ENCODE measurements at regions of chr20 and their contacts with region 1.

Region 1: DNA sequence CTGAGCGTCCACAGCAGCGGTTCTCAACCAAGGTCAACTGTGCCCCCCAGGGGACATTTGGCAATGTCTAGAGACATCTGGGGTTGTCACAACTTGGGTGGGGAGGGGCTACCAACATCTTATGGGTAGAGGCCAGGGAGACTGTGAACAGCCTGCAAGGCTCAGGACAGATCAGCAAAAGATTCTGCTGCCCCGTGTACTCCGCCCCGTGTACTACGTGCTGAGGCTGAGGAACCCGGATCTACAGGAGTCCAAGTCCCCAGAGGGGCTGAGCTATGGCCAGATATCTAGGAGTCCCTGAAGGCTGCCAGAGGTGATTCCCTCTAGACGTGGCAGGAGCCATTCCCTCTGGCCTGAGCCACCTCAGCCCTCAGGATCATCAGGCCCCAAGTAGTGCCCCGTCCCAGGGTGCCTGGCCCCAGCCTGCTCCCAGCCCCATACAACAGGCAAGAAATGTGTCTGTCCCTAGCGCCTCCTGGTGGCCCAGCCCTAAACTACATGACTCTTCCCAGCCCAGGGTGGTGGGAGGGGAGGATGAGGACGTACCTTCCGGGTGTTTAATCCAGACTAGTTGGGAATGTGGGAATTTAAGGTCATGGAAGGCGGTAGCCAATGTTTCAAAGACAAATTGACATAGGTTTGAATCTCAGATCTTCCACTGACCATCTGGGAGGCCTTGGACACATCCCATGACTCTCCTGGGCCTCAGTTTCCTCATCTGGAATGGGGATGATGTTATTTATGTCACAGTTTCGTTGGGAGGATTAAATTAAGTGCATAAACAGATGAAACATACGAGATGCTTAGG is 49.5 kb upstream of the PTPN1 start:
- DNase-seq: peak; percentile 92
- ATAC-seq: peak; percentile 85 to 86

Region 2: DNA sequence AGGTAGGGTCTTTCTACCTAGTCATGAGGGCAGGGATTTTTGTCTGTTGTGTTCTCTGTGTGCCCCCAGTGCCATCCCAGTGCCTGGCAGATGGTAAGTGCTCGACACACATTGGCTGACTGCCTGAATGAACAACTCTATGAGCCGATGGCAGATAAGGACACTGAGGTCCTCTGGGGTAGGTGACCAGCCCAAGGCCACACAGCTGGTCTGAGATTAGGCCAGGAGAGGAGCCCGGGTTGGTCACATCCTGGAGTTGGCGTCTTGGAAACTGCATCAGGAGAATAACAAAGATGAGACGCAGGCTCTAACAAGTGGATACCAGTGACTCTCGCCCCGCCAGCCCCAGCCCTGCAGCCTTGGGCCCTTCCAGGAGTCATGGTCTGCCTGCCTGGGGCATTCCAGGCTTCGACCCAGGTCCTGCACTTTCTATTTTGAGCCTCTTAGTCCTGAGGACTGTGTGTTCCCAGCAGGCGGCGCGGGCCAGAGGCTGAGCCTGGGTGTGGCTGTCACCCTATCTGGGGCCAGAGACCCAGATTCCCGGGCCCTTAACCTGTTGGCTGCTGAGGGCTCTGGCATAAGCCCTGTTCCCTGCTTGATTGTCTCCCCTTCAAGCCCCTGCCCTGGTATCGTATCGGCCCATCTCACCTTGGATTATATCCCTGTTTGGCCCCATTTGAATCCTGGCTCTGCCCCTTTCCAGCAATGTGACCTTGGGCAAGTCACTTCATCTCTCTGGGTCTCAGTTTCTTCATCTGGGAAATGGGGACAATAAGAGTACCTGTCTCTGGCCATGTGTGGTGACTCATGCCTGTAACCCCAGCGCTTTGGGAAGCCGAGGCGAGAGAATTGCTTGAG is 181.8 kb before region 1 on chr20:
- intact Hi-C with region 1: loop called in 1 of 2 experiments (anchors 10 kb)
- DNase-seq: peak; percentile 84
- ATAC-seq: peak; percentile 69 to 72

Region 3: DNA sequence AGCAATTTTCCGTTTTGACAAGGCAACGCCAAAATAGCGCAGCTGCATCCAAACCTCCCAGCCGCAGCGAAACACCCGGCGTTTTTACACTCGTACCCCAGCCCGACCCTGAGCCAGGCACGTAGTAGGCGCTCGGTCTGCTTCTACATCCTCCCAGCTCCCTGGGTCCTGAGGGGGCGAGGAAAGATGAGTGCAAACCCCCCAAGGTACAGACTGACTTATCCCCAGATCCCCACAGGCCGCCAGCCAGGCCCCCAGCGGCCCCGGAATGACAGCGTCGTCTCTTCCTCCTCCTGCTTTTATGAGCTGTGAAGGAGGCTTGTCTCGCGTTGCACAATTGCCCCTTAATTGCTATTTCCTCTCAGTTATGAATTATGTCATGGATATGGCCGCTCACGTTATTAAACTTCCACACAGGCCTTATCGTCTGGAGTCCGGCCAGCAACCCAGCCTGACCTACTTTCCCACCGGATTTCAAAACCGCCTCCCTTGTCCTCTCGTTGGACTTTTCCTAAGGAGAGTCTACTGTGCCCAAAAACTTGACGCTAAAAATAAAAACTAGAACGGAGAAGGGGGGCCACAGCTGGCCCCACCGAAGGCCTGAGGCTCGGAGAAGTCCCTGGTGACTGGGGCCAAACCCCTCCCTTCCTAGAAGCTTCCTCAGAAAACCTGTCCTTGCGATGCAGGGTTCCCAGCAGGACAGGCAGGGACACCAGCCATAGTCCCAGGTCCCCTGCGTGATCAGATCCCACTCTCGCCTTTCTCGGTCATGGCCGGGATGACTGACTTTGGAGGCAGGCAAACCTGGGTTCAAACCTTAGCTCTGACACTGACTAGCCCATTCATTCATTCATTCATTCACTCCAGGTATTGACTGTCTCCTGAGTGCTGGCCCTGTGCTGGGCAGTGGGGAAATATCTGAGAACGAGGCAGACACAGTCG is 81.3 kb before region 1 on chr20:
- intact Hi-C with region 1: loop called in 1 of 2 experiments (anchors 5 kb)
- DNase-seq: peak; percentile 94
- ATAC-seq: peak; percentile 83 to 88

Region 4: DNA sequence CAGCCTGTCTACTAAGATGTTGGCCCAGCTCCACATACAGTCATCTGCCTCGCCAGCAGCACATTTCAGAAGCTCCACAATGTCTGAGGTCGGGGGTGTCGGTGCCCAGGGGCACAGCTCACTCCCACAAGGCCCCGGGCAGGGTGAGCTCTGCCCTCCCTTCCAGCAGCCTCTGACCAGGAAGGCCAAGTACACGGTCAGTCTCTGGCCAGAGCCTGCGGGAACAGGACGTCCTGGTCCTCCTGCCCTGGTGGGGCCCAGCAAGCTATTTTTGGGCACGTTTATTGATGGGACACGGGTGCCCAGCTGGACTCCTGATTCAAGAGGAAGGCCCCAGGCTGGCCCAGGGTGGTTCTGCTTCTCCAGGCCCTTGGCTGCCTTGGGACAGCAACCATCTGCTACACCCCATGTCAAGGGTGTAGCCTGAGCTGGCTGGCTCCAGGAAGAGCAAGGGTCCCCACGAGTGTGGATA is 65.4 kb before region 1 on chr20:
- intact Hi-C with region 1: loop called (anchors 5 to 10 kb)
- DNase-seq: peak; percentile 87
- ATAC-seq: peak; percentile 69 to 85

Region 5: GRCh38 chr20:50415516-50416113 is 45.0 kb before region 1 on chr20:
- intact Hi-C with region 1: loop called in 1 of 2 experiments (anchors 5 kb)
- DNase-seq: peak; percentile 100
- ATAC-seq: peak; percentile 96 to 98